ENCODE measurements at regions of chr12 and their contacts with region 1.

Region 1: GRCh38 chr12:77049767-77050353 is 15.5 kb downstream of the E2F7 start:
- DNase-seq: peak; percentile 13
- ATAC-seq: peak; percentile 85
- H3K4me3 Mint-ChIP-seq: no peak overlapping the region
- H3K27ac Mint-ChIP-seq: no peak overlapping the region
- H3K4me1 Mint-ChIP-seq: no peaks in the 10 kb centered on the region
- H3K27me3 Mint-ChIP-seq: no peaks in the 10 kb centered on the region

Region 2: DNA sequence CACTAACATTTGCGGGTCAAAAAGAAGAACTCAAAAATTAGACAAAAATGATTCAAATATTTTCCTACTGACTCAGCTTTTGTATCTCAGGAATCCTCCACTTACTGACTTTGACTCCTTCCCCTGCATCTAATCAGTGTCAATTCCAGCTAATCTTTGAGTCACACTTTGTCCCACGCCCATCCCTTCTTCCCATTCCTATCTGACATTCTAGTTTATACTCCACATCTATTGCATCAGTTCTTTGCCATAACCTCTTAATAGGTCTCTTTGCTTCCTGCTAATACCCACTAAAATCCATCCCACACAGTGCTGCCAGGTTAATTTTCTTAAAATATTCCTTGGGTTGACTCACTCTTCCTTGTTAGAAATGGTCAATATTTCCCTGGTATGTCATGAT is 720.7 kb before region 1 on chr12:
- CTCF ChIA-PET with region 1: no interaction called
- POLR2A ChIA-PET with region 1: no interaction called
- intact Hi-C with region 1: no loop called
- DNase-seq: no peak
- ATAC-seq: no peak
- H3K4me3 Mint-ChIP-seq: no peak overlapping the region
- H3K27ac Mint-ChIP-seq: no peak overlapping the region
- H3K4me1 Mint-ChIP-seq: no peaks in the 10 kb centered on the region
- H3K27me3 Mint-ChIP-seq: peaks cover 18% of the 10 kb centered on the region

Region 3: DNA sequence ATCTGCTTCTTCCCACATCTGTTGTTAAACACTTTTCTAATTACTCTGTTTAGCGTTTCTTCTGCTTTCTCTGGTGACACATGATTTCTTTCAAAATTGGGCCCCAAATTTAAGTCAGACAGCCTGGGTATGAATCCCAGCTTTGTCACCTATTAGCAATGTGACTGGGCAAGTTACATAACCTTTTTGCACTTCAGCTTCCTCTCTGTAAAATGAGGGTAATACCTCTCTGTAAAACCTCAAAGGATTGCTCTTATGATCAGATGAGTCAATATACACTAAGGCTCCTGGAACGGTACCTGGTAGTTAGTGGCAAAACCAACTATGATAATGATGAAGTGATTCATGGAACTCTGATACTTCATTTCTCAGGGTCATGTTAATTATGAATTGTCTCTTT is 17.5 kb before region 1 on chr12:
- CTCF ChIA-PET with region 1: interaction called, 14 read pairs
- POLR2A ChIA-PET with region 1: no interaction called
- intact Hi-C with region 1: no loop called
- DNase-seq: no peak
- ATAC-seq: peak; percentile 84
- H3K4me3 Mint-ChIP-seq: no peak overlapping the region
- H3K27ac Mint-ChIP-seq: peak overlapping the region; percentile 8
- H3K4me1 Mint-ChIP-seq: peaks cover 13% of the 10 kb centered on the region
- H3K27me3 Mint-ChIP-seq: no peaks in the 10 kb centered on the region

Region 4: GRCh38 chr12:77070382-77070781 is 20.5 kb after region 1 on chr12:
- CTCF ChIA-PET with region 1: no interaction called
- POLR2A ChIA-PET with region 1: no interaction called
- intact Hi-C with region 1: no loop called
- DNase-seq: no peak
- ATAC-seq: no peak
- H3K4me3 Mint-ChIP-seq: no peak overlapping the region
- H3K27ac Mint-ChIP-seq: no peak overlapping the region
- H3K4me1 Mint-ChIP-seq: peaks cover 6% of the 10 kb centered on the region
- H3K27me3 Mint-ChIP-seq: peaks cover 2% of the 10 kb centered on the region

Region 5: DNA sequence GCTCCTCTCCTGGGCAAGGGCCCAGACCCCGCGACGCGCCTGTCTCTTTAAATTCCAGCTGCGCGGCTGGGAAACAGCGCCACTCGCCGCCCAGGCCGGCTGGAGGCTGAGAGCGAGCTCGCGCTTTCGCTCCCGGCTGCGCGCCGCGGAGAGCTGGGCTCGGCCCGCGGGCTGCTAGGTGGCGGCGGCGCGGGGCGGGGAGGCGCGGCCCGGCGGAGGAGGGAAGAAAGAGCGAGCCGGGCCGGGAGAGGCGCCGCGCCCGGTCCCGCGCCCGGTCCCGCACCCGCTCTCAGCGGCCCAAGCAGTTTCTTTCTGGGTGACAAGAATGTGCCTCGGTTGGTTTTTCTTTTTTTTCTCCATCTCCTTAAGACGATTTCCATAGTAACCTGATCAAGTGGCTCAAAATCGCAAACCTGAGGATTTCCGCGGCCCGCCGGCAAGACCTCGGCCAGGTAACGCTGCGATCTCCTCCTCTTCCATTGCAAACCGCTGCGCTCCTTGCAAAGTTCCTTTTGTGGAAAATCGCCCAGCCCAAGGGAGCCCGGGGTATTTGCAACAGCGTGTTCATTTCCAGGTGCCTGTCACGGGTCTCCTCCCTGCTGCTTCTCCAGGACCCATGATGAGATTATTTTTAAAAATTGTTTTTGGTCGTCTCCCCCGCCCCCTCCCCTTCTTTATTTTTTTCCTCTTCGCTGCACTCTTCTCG is 275.1 kb after region 1 on chr12:
- CTCF ChIA-PET with region 1: no interaction called
- POLR2A ChIA-PET with region 1: no interaction called
- intact Hi-C with region 1: loop called in 1 of 2 experiments (anchors 5 kb)
- DNase-seq: peak; percentile 64
- ATAC-seq: peak; percentile 87
- H3K4me3 Mint-ChIP-seq: peak overlapping the region; percentile 51
- H3K27ac Mint-ChIP-seq: no peak overlapping the region
- H3K4me1 Mint-ChIP-seq: peaks cover 10% of the 10 kb centered on the region
- H3K27me3 Mint-ChIP-seq: peaks cover 51% of the 10 kb centered on the region

Region 6: GRCh38 chr12:77685112-77685511 is 635.3 kb after region 1 on chr12:
- CTCF ChIA-PET with region 1: no interaction called
- POLR2A ChIA-PET with region 1: no interaction called
- intact Hi-C with region 1: loop called in 1 of 2 experiments (anchors 5 kb)
- DNase-seq: peak; percentile 30
- ATAC-seq: no peak
- H3K4me3 Mint-ChIP-seq: no peak overlapping the region
- H3K27ac Mint-ChIP-seq: no peak overlapping the region
- H3K4me1 Mint-ChIP-seq: no peaks in the 10 kb centered on the region
- H3K27me3 Mint-ChIP-seq: no peaks in the 10 kb centered on the region

Region 7: GRCh38 chr12:77925536-77926108 is 875.8 kb after region 1 on chr12:
- CTCF ChIA-PET with region 1: no interaction called
- POLR2A ChIA-PET with region 1: no interaction called
- intact Hi-C with region 1: loop called (anchors 5 kb)
- DNase-seq: peak; percentile 52
- ATAC-seq: peak; percentile 69
- H3K4me3 Mint-ChIP-seq: no peak overlapping the region
- H3K27ac Mint-ChIP-seq: no peak overlapping the region
- H3K4me1 Mint-ChIP-seq: no peaks in the 10 kb centered on the region
- H3K27me3 Mint-ChIP-seq: no peaks in the 10 kb centered on the region